ENCODE measurements at regions of chr20 and their contacts with region 1.

Region 1: DNA sequence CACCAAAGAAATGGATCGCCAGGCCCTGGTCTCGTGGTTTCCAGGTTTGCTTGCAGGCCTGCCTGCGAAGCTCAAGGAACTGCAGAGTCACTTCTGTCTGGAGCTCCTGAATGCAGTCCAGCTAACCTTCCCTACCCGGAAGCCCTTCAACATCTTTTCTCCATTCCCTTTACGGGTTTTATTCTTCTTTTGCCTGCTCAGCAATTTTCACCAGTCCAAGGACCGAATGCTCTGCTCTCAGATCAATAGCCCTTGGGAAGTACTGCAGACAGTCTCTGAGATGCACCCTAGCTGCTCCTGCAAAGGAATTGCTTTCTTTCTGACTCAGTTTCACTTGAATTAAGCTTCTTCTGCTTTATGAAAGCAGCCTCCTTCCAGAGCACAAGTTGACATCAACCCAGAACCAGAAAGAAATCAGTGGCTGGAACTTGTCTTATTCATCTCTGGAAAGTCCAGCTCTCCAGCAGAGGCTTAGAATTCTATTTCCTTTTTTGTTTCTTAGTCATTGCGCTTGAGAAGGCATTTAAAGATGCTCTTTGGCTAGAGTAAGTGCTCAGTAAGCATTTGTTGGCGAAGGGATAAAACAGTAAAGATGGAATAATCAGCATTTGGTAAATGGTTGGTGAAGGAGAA is 18.7 kb upstream of the YWHAB start:
- DNase-seq: no peak
- H3K4me3 ChIP-seq: peak overlapping the region in 1 of 2 donors; percentile 46
- H3K27ac ChIP-seq: peak overlapping the region in 1 of 2 donors; percentile 9
- H3K4me1 ChIP-seq: peaks cover 9 to 31% of the 10 kb centered on the region in 2 donors
- H3K27me3 ChIP-seq: no peaks in the 10 kb centered on the region
- CTCF ChIP-seq: no peak

Region 2: DNA sequence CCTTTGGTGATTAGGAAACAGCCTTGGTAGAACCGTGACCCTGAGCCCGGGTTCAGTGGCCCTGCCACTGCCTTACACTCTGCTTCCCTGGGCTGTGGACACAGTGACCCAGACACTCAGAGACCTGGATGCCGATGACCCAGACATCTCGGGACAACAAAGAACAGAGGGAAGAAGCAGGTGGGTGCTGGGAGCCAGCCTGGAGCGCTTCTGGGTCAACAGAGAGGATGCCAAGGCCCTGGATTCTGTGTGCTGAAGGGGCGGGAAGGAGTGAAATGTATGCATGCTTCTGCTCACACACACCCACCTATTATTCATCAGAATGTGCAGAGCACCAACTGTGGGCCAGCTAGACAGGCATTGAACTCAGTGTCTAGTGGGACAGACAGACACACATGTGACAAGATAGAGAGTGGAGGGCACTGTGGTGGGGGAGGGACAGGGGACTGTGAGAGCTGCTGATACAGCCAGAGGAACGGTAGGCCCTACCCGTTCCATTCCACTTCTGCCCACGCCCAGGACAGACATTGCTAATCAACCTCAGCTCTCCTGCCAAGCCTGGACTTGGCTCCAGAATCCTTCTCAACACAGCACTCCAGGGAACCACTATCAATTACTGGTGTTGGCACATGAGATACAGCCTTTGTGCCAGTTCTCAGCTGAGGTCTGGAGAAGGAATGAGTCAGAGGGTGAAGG is 101.0 kb before region 1 on chr20:
- intact Hi-C with region 1: no loop called
- DNase-seq: no peak
- H3K4me3 ChIP-seq: no peak overlapping the region
- H3K27ac ChIP-seq: no peak overlapping the region
- H3K4me1 ChIP-seq: no peaks in the 10 kb centered on the region
- H3K27me3 ChIP-seq: no peaks in the 10 kb centered on the region
- CTCF ChIP-seq: no peak

Region 3: DNA sequence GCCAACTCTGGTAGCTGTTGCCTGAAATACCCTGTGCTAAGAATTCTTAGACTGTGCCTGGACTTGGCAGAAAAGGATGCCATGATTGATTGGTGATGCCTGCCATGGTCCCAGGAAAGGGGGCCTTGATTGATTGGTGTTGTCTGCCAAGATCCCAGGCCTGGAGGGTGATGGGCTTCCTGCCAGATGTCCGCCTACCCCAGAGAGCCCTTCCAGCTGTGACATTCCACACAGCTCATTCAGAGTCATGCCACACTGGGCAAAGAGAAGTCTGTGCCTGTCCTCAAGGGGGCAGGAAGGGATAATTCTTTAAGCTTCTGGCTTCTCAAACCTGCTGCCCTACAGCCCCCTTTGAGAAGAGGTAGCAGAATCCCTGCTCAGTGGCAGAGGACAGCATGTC is 81.0 kb before region 1 on chr20:
- intact Hi-C with region 1: loop called (anchors 1 kb)
- DNase-seq: no peak
- H3K4me3 ChIP-seq: no peak overlapping the region
- H3K27ac ChIP-seq: no peak overlapping the region
- H3K4me1 ChIP-seq: peaks cover 0 to 9% of the 10 kb centered on the region in 2 donors
- H3K27me3 ChIP-seq: no peaks in the 10 kb centered on the region
- CTCF ChIP-seq: peak in 1 of 3 experiments; percentile 40

Region 4: DNA sequence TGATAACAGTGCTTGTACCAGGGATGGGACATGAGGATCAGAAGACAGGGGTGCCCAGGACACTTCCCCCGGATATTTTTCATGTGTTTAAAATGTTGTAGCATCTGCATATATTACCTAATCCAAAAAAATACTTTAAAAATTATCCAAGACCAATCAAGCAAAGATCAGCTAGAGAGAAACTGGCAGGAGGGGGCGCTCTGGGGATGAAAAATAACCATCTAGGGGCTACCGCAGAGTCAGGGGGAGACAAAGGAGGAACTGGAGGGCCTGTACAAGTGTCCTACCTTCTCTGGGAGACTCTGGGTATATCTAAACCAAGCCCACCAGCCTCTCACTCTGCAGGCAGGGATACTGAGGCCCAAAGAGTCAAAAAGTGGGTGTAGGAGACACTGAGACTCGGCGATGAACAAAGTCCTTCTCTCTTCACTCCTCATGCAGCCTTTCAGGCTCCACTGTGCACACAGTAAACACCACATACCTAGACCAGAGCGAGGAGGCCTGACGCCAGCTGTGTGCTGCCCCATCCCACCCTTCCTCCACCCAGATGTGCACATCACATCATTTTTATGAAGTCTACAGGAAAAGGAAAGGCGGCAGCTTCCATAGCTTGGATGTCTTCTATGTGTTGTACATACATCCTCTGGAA is 66.3 kb before region 1 on chr20:
- intact Hi-C with region 1: loop called (anchors 5 kb)
- DNase-seq: no peak
- H3K4me3 ChIP-seq: no peak overlapping the region
- H3K27ac ChIP-seq: no peak overlapping the region
- H3K4me1 ChIP-seq: peaks cover 0 to 3% of the 10 kb centered on the region in 2 donors
- H3K27me3 ChIP-seq: no peaks in the 10 kb centered on the region
- CTCF ChIP-seq: peak in 1 of 3 experiments; percentile 14